ENCODE measurements at regions of chr5 and their contacts with region 1.

Region 1: DNA sequence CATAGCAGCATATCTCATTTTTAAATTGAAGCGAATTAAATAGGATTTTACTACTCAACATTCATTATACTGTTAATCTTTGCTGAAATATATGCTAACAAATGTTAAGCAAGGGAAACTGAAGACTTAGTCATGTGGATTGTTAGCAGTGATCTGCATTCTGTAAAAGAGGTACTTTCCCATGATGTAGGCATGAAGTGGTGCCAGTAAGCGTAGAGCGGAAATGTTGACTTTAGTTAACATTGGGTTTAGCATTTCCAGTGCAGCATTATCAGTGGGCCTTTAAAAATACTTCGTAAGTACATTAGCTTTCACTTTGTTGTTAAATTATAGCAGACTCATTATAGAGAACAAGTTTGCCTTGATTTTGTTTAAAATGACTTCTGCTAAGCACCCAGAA is 130.3 kb downstream of the CDC42SE2 start:
- DNase-seq: peak; percentile 88
- H3K4me3 Mint-ChIP-seq: peak overlapping the region; percentile 70
- H3K27ac Mint-ChIP-seq: peak overlapping the region; percentile 92
- H3K4me1 Mint-ChIP-seq: peaks cover 68% of the 10 kb centered on the region
- H3K27me3 Mint-ChIP-seq: no peaks in the 10 kb centered on the region

Region 2: DNA sequence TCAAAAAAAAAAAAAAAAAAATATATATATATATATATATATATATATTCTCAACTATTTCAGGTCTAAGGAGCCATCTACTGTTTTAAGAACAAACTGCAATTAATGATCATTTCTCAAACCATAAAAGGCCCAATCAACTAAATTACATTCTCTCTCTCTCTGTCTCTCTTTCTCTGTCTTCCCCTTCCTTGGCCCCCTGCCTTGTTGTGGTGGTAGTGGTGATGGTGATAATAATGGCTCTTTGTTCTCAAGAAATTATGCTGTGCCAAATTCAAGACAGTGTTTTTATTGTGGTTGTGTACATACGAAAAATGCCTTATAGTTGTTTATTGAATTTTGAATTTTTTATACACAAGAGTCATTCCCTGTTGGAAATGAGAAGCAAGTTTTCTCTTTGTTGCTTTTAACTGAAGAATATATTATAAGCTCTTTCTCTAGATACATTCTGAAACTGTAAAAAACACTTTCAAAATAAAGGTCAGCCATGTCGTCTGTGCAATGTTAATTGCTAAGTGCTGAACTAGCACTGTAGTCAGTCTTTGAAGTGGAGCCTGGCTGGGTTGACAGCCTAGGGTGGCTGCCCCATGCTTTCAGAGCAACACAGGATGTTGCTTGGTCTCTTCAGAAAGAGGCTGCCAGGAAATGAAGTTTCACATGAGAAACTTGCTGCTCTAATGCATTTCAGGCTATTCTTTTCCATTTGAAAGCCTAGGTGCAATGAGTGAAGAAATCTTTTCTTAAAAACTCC is 325.1 kb before region 1 on chr5:
- intact Hi-C with region 1: loop called (anchors 10 kb)
- DNase-seq: peak; percentile 92
- H3K4me3 Mint-ChIP-seq: peak overlapping the region; percentile 80
- H3K27ac Mint-ChIP-seq: peak overlapping the region; percentile 96
- H3K4me1 Mint-ChIP-seq: peaks cover 49% of the 10 kb centered on the region
- H3K27me3 Mint-ChIP-seq: no peaks in the 10 kb centered on the region

Region 3: DNA sequence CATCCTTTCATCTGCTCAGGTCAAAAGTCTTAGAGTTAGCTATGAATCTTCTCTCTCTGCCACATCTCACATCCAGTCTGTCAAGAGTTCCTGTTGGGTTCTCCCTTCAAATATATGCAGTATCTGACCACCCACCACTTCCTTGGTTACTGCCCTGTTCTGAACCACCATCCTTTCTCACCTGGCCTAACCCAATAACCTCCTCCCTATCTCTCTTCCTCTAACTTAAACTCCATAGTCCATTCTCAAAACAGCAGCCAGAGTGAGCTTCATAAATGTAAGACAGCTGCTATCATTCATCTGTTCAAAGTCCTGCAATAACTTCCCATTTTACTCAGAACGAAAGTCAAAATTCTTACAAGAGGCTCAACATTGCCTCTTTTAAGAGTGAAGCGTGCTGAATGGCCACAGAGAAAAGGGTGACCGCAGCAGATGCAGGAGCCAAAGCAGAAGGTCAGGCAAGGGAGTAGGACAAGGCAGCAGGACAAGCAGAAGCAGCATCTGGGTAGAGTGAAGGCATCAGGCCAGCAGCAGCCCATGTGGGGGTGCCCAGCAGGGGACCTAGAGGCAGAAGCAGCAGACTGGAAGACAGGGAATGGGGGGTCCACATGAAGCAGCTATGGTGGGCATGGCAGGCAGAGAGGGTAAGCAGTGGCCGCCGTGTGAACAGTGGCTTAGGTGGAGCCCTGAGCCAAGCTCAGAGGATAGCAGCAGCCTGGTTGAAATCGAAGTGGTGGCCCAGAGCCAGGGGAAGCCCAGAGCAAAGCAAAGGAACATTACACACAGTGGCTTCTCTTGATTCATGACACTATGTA is 169.5 kb before region 1 on chr5:
- intact Hi-C with region 1: loop called (anchors 1 kb)
- DNase-seq: peak; percentile 59
- H3K4me3 Mint-ChIP-seq: no peak overlapping the region
- H3K27ac Mint-ChIP-seq: no peak overlapping the region
- H3K4me1 Mint-ChIP-seq: peaks cover 5% of the 10 kb centered on the region
- H3K27me3 Mint-ChIP-seq: no peaks in the 10 kb centered on the region

Region 4: DNA sequence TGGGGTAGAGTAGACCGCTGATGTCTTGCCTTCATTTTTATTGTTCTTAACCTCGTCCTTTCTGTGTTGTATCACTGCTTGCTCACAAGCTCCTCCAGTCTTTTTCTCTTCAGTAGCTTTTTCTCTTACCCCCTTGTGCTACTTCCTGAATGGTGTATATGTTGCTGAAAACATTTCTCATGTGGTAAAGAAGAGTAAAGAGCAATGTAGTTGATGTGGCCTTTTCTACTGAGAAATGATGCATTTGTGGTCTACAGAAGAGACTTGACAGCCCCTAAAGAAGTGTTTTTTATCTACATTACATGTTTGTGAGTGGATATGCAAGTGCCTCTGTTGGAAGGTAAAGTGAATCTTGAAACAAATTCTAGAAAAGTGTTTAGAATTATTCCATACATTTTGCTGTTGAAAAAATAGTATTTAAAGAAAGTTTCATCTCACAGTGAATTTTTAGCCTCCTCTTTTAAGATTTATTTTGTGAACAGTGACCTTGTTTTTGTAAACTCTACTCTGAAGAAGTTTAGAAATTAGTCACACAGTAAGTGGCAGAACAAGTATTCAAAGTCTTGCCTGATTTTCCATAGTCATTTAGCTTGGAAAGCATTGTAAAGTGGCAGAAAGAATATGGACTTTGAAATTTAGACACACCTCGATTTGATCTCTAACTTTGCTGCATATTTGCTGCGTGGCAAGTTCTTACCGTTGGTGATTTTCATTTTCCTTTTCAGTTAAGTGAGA is 112.8 kb before region 1 on chr5:
- intact Hi-C with region 1: loop called (anchors 1 kb)
- DNase-seq: peak; percentile 85
- H3K4me3 Mint-ChIP-seq: peak overlapping the region; percentile 87
- H3K27ac Mint-ChIP-seq: peak overlapping the region; percentile 91
- H3K4me1 Mint-ChIP-seq: peaks cover 71% of the 10 kb centered on the region
- H3K27me3 Mint-ChIP-seq: no peaks in the 10 kb centered on the region

Region 5: GRCh38 chr5:131357739-131358561 is 36.2 kb before region 1 on chr5:
- intact Hi-C with region 1: loop called (anchors 5 kb)
- DNase-seq: peak; percentile 80
- H3K4me3 Mint-ChIP-seq: peak overlapping the region; percentile 49
- H3K27ac Mint-ChIP-seq: peak overlapping the region; percentile 81
- H3K4me1 Mint-ChIP-seq: peaks cover 45% of the 10 kb centered on the region
- H3K27me3 Mint-ChIP-seq: no peaks in the 10 kb centered on the region

Region 6: DNA sequence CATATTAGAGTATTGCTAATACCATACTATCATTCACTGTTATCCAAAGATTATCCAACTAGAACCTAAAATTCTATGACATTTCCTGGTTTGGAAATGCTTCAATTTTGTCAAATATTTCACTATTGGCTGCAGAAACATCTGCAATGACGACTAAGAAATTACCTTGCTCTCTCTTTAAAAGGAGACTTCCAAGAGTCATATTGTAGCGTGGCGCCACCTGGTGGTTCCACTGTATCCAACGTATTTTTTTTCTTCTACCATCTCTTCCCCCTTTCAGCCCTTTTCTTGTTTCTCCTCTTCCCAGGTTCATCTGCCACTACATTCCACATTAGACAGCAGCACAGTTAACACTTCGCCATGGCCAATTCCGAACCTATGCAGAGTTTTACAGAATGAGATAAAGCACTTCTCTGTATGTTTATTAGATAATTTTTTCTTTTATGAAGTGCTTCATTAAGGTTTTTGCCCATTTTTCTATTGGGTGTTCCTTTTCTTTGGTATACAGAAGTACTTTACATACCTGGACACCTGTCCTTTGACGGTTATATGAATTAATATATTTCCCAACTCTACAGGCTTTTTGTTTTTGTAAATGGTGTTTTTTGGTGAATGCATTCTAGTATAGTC is 23.2 kb after region 1 on chr5:
- intact Hi-C with region 1: loop called (anchors 1 kb)
- DNase-seq: peak; percentile 93
- H3K4me3 Mint-ChIP-seq: peak overlapping the region; percentile 46
- H3K27ac Mint-ChIP-seq: peak overlapping the region; percentile 39
- H3K4me1 Mint-ChIP-seq: peaks cover 40% of the 10 kb centered on the region
- H3K27me3 Mint-ChIP-seq: no peaks in the 10 kb centered on the region

Region 7: DNA sequence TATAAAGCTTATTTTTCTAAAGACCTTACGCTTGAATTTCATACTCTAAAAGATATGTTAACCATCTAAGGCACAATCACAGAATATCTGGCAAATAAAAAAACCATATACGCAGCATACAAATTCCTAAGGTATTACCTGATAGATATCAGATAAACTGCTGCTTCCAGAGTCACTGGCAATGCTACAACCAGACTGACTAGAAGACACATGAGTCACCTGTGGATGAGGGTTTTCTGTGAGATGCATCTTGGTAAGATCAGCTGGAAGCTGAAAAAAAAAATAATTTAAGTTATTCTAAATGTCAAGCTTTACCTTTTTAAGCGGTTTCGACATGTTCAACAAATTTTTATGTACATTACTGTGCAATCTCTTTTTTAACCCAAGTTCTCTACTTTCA is 127.1 kb after region 1 on chr5:
- intact Hi-C with region 1: no loop called
- DNase-seq: peak; percentile 37
- H3K4me3 Mint-ChIP-seq: no peak overlapping the region
- H3K27ac Mint-ChIP-seq: no peak overlapping the region
- H3K4me1 Mint-ChIP-seq: peaks cover 21% of the 10 kb centered on the region
- H3K27me3 Mint-ChIP-seq: no peaks in the 10 kb centered on the region

Measured in activated CD4-positive, alpha-beta T cell treated with anti-CD3 and anti-CD28 coated beads, Interleukin-2, amount 10 ng/mL, durations not matched to agents 24 days and 14 days (primary cell).